ENCODE measurements at regions of chr2 and their contacts with region 1.

Region 1: GRCh38 chr2:113138428-113139322 is 11.3 kb downstream of the IL1RN start:
- DNase-seq: peak; percentile 79

Region 2: DNA sequence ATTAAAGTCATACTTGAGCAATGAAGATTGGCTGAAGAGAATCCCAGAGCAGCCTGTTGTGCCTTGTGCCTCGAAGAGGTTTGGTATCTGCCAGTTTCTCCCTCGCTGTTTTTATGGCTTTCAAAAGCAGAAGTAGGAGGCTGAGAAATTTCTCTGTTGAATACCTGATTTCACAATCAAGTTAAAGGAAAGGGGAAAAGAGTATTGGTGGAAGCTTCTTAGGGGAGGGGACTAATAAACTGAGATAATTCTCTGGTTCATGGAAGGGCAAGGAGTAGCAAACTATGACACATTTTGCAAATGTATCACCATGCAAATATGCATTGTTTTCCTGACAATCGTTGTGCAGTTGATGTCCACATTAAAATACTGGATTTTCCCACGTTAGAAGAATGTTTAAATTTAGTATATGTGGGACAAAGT is 302.0 kb before region 1 on chr2 and contains the start of gene IL1B:
- in situ Hi-C with region 1: no loop called
- DNase-seq: no peak

Region 3: DNA sequence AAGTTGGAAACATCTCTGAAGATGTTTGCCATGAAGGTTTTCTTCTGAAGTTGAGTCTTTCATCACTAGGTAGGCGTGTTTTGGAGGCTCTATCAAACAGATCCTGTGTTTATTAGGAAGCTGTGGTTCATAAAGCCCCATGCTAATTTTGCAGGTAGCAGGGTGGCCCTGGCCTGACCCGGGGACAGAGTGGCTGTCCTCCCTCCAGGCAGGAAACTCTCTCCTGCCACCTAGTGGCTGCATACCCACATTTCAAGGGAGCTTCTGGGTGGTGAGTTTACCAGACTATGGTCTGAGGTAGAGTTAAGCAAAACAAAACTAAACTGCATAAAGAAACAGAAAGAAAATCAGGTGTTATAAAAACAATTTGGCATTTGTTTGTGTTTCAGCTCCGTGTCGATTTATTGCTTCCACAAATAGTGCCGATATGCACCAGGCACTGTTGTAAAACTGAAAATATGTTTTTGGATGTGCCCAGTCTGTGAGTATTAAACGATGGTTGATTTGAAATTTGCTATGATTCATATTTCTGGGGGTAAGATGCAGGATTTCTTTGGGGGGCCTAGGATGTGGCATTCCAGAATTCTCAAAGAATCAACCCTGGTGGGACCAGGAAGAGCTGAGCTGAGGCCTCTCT is 253.7 kb before region 1 on chr2:
- in situ Hi-C with region 1: no loop called
- DNase-seq: peak; percentile 58

Region 4: GRCh38 chr2:113370478-113371091 is 231.9 kb after region 1 on chr2:
- in situ Hi-C with region 1: loop called (anchors 25 kb)
- DNase-seq: peak; percentile 86